Activated T-helper 1 cell treated with anti-CD3 and anti-CD28 coated beads, Interleukin-12 subunit alpha, Interleukin-12 subunit beta, Interleukin-2, Interleukin-4 antibody, amounts not matched to agents 30 ng/mL and 10 ng/mL and 1 ng/mL, durations not matched to agents 14 hours and 24 hours and 36 hours (primary cell): ENCODE measurements at regions of chr12 and their contacts with region 1.

Region 1: GRCh38 chr12:27488479-27488878 is 35.5 kb upstream of the PPFIBP1 start:
- DNase-seq: no peak
- H3K4me3 Mint-ChIP-seq: no peak overlapping the region
- H3K27ac Mint-ChIP-seq: no peak overlapping the region
- H3K4me1 Mint-ChIP-seq: peaks cover 6% of the 10 kb centered on the region
- H3K27me3 Mint-ChIP-seq: peaks cover 7% of the 10 kb centered on the region

Region 2: DNA sequence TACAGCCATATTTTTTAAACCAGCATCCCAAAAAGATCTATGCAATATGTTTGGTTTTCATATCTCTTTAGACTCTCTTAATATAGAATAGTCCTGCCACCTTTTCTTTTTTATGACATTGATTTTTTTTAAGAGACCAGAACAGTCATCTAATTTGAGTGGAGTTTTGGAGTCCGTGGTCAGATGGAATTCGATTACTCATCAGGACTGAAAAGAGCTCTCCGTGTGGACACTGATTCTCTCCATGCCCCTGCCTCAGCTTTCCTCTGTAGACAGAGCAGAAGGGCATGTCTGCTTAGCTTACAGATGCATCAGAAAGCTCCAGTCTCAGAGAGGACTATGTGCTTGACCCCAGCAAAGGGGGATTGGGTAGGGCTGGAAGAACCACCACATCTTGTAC is 14.1 kb before region 1 on chr12:
- intact Hi-C with region 1: loop called (anchors 2 kb)
- DNase-seq: no peak
- H3K4me3 Mint-ChIP-seq: no peak overlapping the region
- H3K27ac Mint-ChIP-seq: no peak overlapping the region
- H3K4me1 Mint-ChIP-seq: peaks cover 44% of the 10 kb centered on the region
- H3K27me3 Mint-ChIP-seq: no peaks in the 10 kb centered on the region